Tibial artery (tissue), 4 donors: ENCODE measurements at regions of chr4 and their contacts with region 1.

Region 1: GRCh38 chr4:90670183-90670582 is 543.0 kb downstream of the CCSER1 start:
- DNase-seq: no peak
- H3K4me3 ChIP-seq: no peak overlapping the region
- H3K27ac ChIP-seq: no peak overlapping the region
- H3K4me1 ChIP-seq: no peaks in the 10 kb centered on the region
- H3K27me3 ChIP-seq: no peaks in the 10 kb centered on the region
- CTCF ChIP-seq: no peak

Region 2: GRCh38 chr4:90254357-90254756 is 415.8 kb before region 1 on chr4:
- intact Hi-C with region 1: no loop called
- DNase-seq: no peak
- H3K4me3 ChIP-seq: no peak overlapping the region
- H3K27ac ChIP-seq: no peak overlapping the region
- H3K4me1 ChIP-seq: no peaks in the 10 kb centered on the region
- H3K27me3 ChIP-seq: no peaks in the 10 kb centered on the region
- CTCF ChIP-seq: no peak

Region 3: DNA sequence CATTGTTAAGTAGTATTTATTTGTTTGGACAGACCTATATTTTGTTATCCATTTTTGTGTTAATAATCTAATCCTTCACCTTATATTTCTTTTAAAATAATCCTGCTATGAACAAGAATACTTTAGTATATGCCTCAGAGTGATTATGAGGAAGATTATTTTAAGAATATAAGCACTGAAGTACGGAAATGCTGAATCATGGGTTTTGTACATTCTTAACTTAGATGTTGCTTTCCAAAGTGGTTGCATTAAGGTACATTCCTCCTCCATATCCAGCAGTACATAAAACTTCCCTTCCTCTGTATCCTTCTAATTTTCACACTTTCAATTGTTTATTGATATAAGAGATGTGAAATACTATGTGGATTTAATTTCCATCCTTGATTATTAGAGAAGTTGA is 1142.1 kb after region 1 on chr4:
- intact Hi-C with region 1: loop called (anchors 10 kb)
- DNase-seq: no peak
- H3K4me3 ChIP-seq: no peak overlapping the region
- H3K27ac ChIP-seq: no peak overlapping the region
- H3K4me1 ChIP-seq: no peaks in the 10 kb centered on the region
- H3K27me3 ChIP-seq: no peaks in the 10 kb centered on the region
- CTCF ChIP-seq: no peak